ENCODE measurements at regions of chr19 and their contacts with region 1.

Region 1: DNA sequence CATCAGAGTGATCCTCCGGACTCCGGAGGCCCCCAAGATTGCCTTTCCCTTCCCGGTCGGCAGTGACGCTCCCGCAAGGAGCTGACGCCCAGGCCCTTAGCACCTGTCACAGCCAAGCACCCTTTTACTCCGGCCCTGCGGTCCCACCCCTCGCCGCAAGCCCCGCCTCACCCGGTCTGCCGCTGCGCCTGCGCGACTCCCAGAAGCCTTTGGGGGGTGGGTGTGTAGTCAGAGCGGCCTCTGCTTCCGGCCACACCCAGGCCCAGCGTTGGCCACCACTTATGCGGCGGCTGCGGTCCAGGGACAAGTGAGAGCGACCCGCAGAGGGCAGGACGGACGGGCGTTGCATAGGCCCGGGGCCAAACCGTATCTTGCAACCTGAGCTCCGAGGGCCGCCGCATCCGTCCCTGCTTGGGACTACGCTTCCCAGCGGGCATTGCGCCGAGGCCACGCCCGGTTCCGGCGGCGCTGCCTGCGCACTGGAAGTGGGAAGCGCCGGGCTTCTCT is 441 bp upstream of the ZFP28 start:
- DNase-seq: peak; percentile 83 to 96 (median 90)
- H3K4me3 ChIP-seq: peak overlapping the region; percentile 59 to 99 (median 83)
- H3K27ac ChIP-seq: peak overlapping the region; percentile 79 to 100 (median 96)
- H3K27me3 ChIP-seq: no peaks in the 10 kb centered on the region
- CTCF ChIP-seq: peak in 17 of 56 donors; percentile 1 to 32 (median 20)

Region 2: GRCh38 chr19:56174550-56174949 is 363.8 kb before region 1 on chr19:
- intact Hi-C with region 1: no loop called
- DNase-seq: no peak
- H3K4me3 ChIP-seq: no peak overlapping the region
- H3K27ac ChIP-seq: no peak overlapping the region
- H3K27me3 ChIP-seq: peaks cover 0 to 17% (median 0%) of the 10 kb centered on the region in 45 donors
- CTCF ChIP-seq: no peak

Region 3: DNA sequence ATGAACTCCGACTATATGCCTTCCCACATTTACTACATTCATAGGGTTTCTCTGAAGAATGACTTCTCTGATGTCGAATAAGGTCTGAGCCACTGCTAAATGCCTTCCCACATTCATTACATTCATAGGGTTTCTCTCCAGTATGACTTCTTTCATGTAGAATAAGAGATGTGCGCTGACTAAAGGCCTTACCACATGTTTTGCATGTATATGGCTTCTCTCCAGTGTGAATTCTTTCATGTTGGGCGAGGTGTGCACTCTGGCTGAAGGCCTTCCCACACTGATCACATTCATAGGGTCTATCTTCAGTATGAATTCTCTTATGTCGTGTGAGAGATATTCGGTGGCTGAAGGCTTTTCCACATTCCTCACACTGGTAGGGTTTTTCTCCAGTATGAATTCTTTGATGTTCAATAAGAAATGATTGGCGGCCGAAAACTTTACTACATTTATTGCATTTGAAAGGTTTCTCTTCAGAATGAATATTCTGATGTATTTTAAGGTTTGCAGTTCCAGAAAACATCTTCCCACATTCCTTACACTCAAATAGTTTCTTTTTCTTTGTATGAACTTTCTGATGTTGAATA is 97.0 kb before region 1 on chr19:
- intact Hi-C with region 1: no loop called
- DNase-seq: no peak
- H3K4me3 ChIP-seq: no peak overlapping the region
- H3K27ac ChIP-seq: no peak overlapping the region
- H3K27me3 ChIP-seq: no peaks in the 10 kb centered on the region
- CTCF ChIP-seq: no peak

Region 4: DNA sequence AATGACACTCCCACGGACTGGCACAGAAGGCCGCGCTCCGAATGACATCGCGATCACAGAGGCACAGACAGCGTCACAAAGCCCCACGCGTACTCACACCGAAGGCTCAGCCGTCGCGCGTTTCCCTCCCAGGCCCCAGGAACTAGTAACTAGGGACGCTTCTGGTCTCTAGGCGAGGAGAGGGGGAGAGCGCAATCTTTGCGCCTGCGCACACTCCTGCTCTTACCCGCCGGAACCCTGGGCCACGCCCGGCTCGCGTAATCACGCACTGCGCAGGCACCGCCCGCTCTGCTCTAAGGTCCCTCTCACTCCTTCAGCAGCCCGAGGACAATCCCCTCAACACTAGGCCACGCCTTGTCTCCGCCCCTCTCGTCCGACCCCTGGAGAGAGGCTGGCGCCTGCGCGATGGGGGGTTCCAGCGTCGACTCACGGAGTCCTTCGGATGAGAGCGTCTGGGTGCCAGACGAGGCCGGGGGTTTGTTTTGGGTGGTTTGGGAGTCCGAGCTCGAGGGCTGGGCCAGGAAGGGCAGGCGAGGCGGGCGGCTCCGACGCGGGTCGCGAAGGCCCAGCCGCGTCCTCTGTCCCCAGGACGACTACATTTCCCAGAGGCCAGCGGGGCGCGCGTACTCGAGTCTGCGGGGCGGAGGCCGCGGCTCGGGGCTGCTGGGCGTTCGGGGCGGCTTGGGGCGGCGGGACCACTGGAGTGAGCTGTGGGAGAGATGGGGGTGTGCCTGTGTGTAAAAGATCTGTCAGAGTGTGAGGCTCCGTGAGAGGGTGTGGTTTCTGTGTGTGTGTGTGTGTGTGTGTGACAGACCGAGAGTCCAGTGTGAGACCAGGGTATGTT is 30.6 kb before region 1 on chr19 and contains the start of gene ZNF471:
- intact Hi-C with region 1: loop called (anchors 1 to 2 kb)
- DNase-seq: peak; percentile 98 to 100 (median 99)
- H3K4me3 ChIP-seq: peak within 1 kb of the TSS; percentile 54 to 96 (median 80)
- H3K27ac ChIP-seq: peak within 1 kb of the TSS; percentile 87 to 99 (median 97)
- H3K27me3 ChIP-seq: no peaks in the 10 kb centered on the region
- CTCF ChIP-seq: peak in 14 of 56 donors; percentile 8 to 43 (median 15)
- total RNA-seq, gene ZNF471: 17.4 to 50.0 (median 29.5) TPM

Region 5: DNA sequence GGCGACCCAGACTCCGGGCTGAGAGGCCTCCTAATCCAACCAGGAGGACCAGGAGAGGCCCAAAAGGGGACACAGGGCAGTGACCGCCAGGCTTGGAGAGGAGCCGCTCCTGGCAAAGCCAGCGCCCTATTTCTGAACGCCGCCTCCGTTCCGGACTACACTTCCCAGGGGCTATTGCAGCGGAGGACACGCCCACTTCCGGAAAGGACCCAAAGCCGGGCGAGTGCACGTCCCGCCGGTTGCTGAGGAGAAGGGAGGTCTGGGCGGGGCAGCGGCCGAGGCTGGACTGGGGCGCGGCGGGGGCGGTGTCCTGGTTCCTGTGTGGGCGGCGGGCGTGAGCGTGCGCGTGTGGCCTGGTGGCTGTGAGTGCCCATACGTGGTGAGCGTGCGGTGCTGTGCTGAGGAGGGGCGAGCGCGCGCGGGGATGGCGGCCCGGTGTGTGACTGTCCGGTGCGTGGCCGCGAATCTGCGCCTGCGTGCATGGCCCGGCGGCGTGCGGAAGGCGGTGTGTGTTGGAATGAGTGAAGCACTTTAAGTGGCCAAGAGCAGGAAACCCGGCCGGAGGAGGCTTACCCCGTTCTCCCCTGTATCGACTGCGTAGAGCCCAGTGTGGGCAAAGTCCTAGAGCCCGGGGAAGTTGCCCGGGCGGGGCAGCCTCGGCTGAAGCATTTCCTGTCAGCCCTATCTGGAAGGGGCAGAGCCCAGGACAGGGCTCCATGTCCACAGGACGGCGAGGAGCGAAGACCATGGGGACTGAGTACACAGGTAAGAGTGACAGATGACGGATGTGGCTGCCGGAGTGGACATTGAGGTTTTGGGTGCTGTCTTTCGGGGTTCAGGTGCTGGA is 29.2 kb after region 1 on chr19 and contains the start of gene ZNF470:
- intact Hi-C with region 1: loop called (anchors 2 kb)
- DNase-seq: peak; percentile 89 to 96 (median 93)
- H3K4me3 ChIP-seq: peak within 1 kb of the TSS; percentile 70 to 99 (median 91)
- H3K27ac ChIP-seq: peak within 1 kb of the TSS in 58 of 59 donors; percentile 3 to 92 (median 83)
- H3K27me3 ChIP-seq: no peaks in the 10 kb centered on the region
- CTCF ChIP-seq: peak in 15 of 56 donors; percentile 2 to 47 (median 22)
- total RNA-seq, gene ZNF470: 8.3 to 24.8 (median 15.1) TPM

Region 6: DNA sequence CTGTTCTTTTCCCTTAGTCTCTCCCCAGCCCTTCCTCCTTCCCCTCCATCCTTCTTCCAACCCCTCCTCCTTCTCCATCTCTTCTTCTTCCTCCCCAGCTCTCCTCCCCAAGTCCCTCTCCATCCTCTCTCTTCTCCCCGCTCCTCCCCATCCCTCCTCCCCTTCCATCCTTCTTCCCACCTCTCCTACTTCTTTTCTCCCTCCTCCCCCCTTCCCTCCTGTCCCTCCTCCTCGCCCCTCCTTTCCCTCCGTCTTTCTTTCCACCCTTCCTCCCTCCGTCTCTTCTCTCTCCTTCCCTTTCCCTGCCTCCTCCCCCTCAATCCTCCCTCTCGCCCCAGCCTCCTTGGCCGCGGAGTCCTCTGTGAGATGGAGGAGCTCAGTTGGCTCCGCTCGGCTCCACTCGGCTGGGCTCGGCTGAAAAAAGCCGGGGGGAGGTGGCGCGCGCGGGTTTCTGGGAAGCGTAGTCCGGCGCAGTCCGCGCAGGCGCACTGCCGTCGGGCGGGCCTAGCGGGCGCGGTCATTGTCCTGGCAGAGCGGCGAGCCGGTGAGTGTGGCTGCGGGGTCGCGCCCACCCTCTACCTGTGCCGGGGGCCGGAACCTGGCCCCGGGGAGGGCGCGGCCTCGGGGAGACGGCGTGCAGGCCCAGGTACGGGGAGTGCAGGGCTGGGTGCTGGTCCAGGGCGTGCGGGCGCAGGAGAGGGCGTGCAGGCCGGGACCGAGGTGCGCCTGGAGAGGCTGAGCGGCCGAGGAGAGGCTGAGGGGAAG is 56.7 kb after region 1 on chr19 and contains the start of gene ZNF71:
- intact Hi-C with region 1: loop called in 1 of 2 experiments (anchors 2 kb)
- DNase-seq: peak; percentile 71 to 94 (median 86)
- H3K4me3 ChIP-seq: peak within 1 kb of the TSS; percentile 51 to 99 (median 95)
- H3K27ac ChIP-seq: peak within 1 kb of the TSS in 52 of 59 donors; percentile 27 to 90 (median 71)
- H3K27me3 ChIP-seq: no peaks in the 10 kb centered on the region
- CTCF ChIP-seq: peak in 21 of 56 donors; percentile 9 to 45 (median 29)
- total RNA-seq, gene ZNF71: 10.6 to 21.2 (median 15.5) TPM

Region 7: GRCh38 chr19:56834564-56835375 is 296.5 kb after region 1 on chr19:
- intact Hi-C with region 1: no loop called
- DNase-seq: no peak
- H3K4me3 ChIP-seq: no peak overlapping the region
- H3K27ac ChIP-seq: peak overlapping the region in 3 of 59 donors; percentile 5 to 24 (median 21)
- H3K27me3 ChIP-seq: no peaks in the 10 kb centered on the region
- CTCF ChIP-seq: no peak

Measured in dorsolateral prefrontal cortex (tissue), 120 donors.